ENCODE measurements at regions of chr2 and their contacts with region 1.

Region 1: GRCh38 chr2:168858146-168858545 is 32.1 kb downstream of the SPC25 start:
- DNase-seq: no peak
- H3K4me3 ChIP-seq: no peak overlapping the region
- H3K4me3 Mint-ChIP-seq: no peak overlapping the region
- H3K27ac Mint-ChIP-seq: no peak overlapping the region
- H3K4me1 ChIP-seq: 0 out of 2 replicates have a peak, but pooled peaks cover 8% of the 10 kb centered on the region
- H3K4me1 Mint-ChIP-seq: peaks cover 13% of the 10 kb centered on the region
- H3K27me3 ChIP-seq: no peaks in the 10 kb centered on the region
- H3K27me3 Mint-ChIP-seq: no peaks in the 10 kb centered on the region
- CTCF ChIP-seq: no peak

Region 2: GRCh38 chr2:168920504-168921157 is 62.5 kb after region 1 on chr2:
- CTCF ChIA-PET with region 1: interaction called, 3 read pairs
- POLR2A ChIA-PET with region 1: no interaction called
- intact Hi-C with region 1: loop called (anchors 5 kb)
- DNase-seq: peak in 1 of 2 experiments; percentile 45
- H3K4me3 ChIP-seq: no peak overlapping the region
- H3K4me3 Mint-ChIP-seq: no peak overlapping the region
- H3K27ac Mint-ChIP-seq: no peak overlapping the region
- H3K4me1 ChIP-seq: no peaks in the 10 kb centered on the region
- H3K4me1 Mint-ChIP-seq: no peaks in the 10 kb centered on the region
- H3K27me3 ChIP-seq: peaks cover 2% of the 10 kb centered on the region; the same call in 1 of the 2 replicates
- H3K27me3 Mint-ChIP-seq: peaks cover 24% of the 10 kb centered on the region
- CTCF ChIP-seq: peak; percentile 42 to 51

Measured in Caco-2 (cell line).